ENCODE measurements at regions of chr11 and their contacts with region 1.

Region 1: DNA sequence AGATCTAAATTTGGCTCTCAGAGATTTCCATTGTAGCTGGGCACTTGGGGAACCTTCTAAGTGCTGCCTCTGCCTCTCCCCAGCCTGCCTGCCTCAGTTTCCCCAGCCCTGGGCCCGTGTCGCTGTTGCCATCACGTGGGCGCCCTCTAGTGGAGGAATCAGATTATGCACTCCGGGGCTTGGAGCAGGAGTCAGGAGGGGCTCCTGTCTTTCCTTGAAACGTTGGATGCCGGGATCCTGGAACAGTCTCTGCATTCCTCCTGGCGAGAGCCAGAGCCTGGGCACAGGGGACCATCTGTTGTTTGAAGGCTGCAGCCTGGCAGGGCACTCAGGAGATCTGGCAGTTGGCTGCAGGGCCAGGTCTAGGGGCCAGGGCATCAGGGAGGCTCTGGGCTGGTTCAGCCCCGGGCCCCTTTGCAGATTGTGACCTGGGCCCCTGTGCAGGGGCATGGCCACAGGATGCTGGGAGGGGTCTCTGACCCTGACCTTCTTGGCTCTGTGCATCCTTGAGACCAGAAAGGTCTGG is 71.6 kb downstream of the LRP5 start:
- DNase-seq: peak; percentile 47
- H3K4me3 ChIP-seq: no peak overlapping the region
- H3K27ac ChIP-seq: no peak overlapping the region
- H3K4me1 ChIP-seq: peaks cover 20% of the 10 kb centered on the region
- H3K27me3 ChIP-seq: no peaks in the 10 kb centered on the region
- CTCF ChIP-seq: peak; percentile 84 to 91 (median 89)
- POLR2A ChIP-seq: no peak

Region 2: DNA sequence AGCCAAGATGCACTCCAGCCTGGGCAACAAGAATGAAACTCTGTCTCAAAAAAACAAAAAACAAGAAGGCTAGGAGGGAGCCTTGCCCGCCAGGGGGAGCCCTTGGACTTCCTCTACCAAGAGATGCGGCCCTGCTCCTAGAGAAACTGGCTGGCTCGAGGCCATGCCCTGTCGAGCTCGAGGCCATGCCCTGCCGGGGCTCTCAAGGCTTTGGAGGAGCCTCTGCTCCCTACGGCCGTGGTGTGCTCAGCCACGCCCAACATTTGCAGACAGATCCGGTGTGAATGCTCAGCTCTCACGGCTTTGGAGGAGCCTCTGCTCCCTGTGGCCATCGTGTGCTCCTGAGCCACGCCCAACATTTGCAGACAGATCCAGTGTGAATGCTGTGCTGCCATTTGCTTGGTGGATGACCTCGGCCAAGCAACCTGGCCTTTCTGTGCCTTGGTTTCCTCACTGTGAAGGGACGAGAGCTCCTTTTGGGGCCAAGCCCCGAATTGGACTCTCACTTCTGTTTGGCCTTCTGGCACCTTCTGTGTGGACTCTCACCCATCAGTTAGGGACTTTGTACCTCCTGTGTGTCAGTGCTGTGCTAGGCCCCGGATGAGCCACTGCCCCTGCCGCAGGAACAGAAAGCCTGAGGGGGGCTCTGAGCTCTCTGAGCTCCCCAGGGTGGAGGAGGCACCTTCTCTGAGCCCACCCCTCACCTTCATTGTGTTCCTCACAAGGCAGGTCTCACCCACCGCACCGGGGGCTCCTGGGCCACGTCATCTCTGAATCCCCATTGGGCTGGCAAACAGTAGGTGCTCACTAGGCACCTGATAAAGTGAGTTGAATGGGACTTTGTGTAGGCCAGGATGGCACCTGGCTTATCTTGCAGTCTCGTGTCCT is 126.3 kb before region 1 on chr11:
- intact Hi-C with region 1: loop called (anchors 5 kb)
- DNase-seq: peak; percentile 94
- H3K4me3 ChIP-seq: no peak overlapping the region
- H3K27ac ChIP-seq: no peak overlapping the region
- H3K4me1 ChIP-seq: no peaks in the 10 kb centered on the region
- H3K27me3 ChIP-seq: no peaks in the 10 kb centered on the region
- CTCF ChIP-seq: peak; percentile 83 to 95 (median 88)
- POLR2A ChIP-seq: no peak

Region 3: GRCh38 chr11:68271781-68272608 is 112.0 kb before region 1 on chr11 and contains the start of gene C11orf24:
- intact Hi-C with region 1: loop called (anchors 5 kb)
- DNase-seq: peak; percentile 95
- H3K4me3 ChIP-seq: peak within 1 kb of the TSS; percentile 69 to 79
- H3K27ac ChIP-seq: peak within 1 kb of the TSS; percentile 93
- H3K4me1 ChIP-seq: no peaks in the 10 kb centered on the region
- H3K27me3 ChIP-seq: no peaks in the 10 kb centered on the region
- CTCF ChIP-seq: peak in 2 of 4 experiments; percentile 2 to 15
- POLR2A ChIP-seq: peak; percentile 81
- total RNA-seq, gene C11orf24: 25.1 to 61.0 TPM

Region 4: GRCh38 chr11:68312117-68312779 is 71.8 kb before region 1 on chr11 and contains the start of gene LRP5:
- intact Hi-C with region 1: loop called (anchors 5 kb)
- DNase-seq: no peak
- H3K4me3 ChIP-seq: peak within 1 kb of the TSS; percentile 60 to 75
- H3K27ac ChIP-seq: peak within 1 kb of the TSS; percentile 66 to 79
- H3K4me1 ChIP-seq: peaks cover 4% of the 10 kb centered on the region
- H3K27me3 ChIP-seq: no peaks in the 10 kb centered on the region
- CTCF ChIP-seq: no peak
- POLR2A ChIP-seq: no peak
- total RNA-seq, gene LRP5: 48.3 to 57.1 TPM

Region 5: DNA sequence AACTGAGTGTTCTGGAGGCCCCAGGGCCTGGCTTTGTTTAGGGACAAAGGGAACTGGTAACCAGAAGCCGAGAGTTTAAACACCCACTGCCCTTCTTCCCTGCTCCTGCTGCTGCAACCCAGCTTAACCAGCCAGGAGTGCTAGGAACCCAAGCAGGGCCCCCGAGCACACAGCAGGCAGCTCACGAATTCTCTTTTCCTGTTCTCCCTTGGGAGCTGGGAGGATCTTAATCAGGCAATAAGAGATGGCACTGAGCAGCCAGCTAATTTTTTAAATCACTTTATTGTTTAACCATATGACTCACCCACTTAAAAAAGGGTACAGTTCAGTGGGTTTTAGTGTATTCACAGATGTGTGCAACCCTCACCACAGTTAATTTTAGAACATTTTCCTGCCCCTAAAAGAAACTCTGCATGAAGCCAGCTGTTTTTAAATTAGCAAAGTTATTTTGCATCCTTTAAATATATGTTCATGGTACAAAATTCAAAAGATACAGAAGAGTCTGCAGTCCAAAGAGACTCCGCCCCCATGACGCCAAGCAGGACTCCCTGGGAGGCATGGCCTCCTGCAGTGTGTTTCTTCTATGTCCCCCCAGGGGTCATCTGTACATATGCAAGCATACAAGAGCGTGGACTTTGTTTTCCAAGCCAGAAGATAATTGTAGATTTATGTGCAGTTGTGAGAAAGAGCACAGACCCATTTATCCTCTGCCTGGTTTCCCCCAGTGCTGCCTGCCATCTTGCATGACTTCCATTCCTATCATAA is 57.6 kb after region 1 on chr11:
- intact Hi-C with region 1: loop called (anchors 5 kb)
- DNase-seq: no peak
- H3K4me3 ChIP-seq: no peak overlapping the region
- H3K27ac ChIP-seq: no peak overlapping the region
- H3K4me1 ChIP-seq: no peaks in the 10 kb centered on the region
- H3K27me3 ChIP-seq: no peaks in the 10 kb centered on the region
- CTCF ChIP-seq: no peak
- POLR2A ChIP-seq: no peak

Region 6: GRCh38 chr11:68488623-68489022 is 104.6 kb after region 1 on chr11:
- intact Hi-C with region 1: no loop called
- DNase-seq: no peak
- H3K4me3 ChIP-seq: no peak overlapping the region
- H3K27ac ChIP-seq: no peak overlapping the region
- H3K4me1 ChIP-seq: no peaks in the 10 kb centered on the region
- H3K27me3 ChIP-seq: no peaks in the 10 kb centered on the region
- CTCF ChIP-seq: no peak
- POLR2A ChIP-seq: no peak

Region 7: DNA sequence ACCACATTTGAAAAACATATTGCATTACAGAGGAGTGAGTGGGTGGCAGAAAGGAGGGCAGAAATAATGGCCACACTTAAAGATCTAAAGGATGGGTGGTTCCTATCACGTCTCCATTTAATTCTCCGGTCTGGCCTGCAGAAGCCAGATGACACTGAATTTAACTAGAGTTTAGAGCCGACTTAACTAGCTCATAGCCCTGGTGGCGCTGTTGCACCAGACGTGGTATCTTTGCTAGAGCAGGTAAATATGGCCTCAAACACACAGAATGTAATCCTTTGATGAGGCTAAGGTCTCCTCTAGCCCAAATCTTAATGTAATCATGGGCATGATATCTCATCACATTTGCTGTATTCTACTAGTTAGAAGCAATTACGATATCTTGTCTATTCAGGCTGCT is 248.8 kb after region 1 on chr11:
- intact Hi-C with region 1: no loop called
- DNase-seq: peak; percentile 51
- H3K4me3 ChIP-seq: no peak overlapping the region
- H3K27ac ChIP-seq: no peak overlapping the region
- H3K4me1 ChIP-seq: no peaks in the 10 kb centered on the region
- H3K27me3 ChIP-seq: no peaks in the 10 kb centered on the region
- CTCF ChIP-seq: peak in 2 of 4 experiments; percentile 43
- POLR2A ChIP-seq: no peak

Region 8: GRCh38 chr11:69080257-69080995 is 696.4 kb after region 1 on chr11:
- intact Hi-C with region 1: loop called (anchors 5 kb)
- DNase-seq: no peak
- H3K4me3 ChIP-seq: no peak overlapping the region
- H3K27ac ChIP-seq: no peak overlapping the region
- H3K4me1 ChIP-seq: no peaks in the 10 kb centered on the region
- H3K27me3 ChIP-seq: no peaks in the 10 kb centered on the region
- CTCF ChIP-seq: no peak
- POLR2A ChIP-seq: no peak

Region 9: GRCh38 chr11:69321877-69322361 is 937.9 kb after region 1 on chr11:
- intact Hi-C with region 1: no loop called
- DNase-seq: no peak
- H3K4me3 ChIP-seq: no peak overlapping the region
- H3K27ac ChIP-seq: no peak overlapping the region
- H3K4me1 ChIP-seq: no peaks in the 10 kb centered on the region
- H3K27me3 ChIP-seq: no peaks in the 10 kb centered on the region
- CTCF ChIP-seq: no peak
- POLR2A ChIP-seq: no peak